CD4-positive, alpha-beta memory T cell (primary cell): ENCODE measurements at regions of chr17 and their contacts with region 1.

Region 1: GRCh38 chr17:75589012-75589918 is 1.7 kb downstream of the MYO15B start:
- DNase-seq: peak; percentile 85 to 93 (median 92)
- H3K4me3 ChIP-seq: peak overlapping the region in 1 of 2 donors; percentile 41
- H3K4me3 Mint-ChIP-seq: peak overlapping the region; percentile 68 to 83 (median 78)
- H3K27ac ChIP-seq: no peak overlapping the region
- H3K27ac Mint-ChIP-seq: peak overlapping the region in 5 of 7 donors; percentile 57 to 88 (median 86)
- H3K4me1 ChIP-seq: peaks cover 18% of the 10 kb centered on the region
- H3K4me1 Mint-ChIP-seq: peaks cover 0 to 6% (median 3%) of the 10 kb centered on the region in 4 donors
- H3K27me3 ChIP-seq: no peaks in the 10 kb centered on the region
- H3K27me3 Mint-ChIP-seq: peaks cover 0 to 4% of the 10 kb centered on the region in 2 donors

Region 2: DNA sequence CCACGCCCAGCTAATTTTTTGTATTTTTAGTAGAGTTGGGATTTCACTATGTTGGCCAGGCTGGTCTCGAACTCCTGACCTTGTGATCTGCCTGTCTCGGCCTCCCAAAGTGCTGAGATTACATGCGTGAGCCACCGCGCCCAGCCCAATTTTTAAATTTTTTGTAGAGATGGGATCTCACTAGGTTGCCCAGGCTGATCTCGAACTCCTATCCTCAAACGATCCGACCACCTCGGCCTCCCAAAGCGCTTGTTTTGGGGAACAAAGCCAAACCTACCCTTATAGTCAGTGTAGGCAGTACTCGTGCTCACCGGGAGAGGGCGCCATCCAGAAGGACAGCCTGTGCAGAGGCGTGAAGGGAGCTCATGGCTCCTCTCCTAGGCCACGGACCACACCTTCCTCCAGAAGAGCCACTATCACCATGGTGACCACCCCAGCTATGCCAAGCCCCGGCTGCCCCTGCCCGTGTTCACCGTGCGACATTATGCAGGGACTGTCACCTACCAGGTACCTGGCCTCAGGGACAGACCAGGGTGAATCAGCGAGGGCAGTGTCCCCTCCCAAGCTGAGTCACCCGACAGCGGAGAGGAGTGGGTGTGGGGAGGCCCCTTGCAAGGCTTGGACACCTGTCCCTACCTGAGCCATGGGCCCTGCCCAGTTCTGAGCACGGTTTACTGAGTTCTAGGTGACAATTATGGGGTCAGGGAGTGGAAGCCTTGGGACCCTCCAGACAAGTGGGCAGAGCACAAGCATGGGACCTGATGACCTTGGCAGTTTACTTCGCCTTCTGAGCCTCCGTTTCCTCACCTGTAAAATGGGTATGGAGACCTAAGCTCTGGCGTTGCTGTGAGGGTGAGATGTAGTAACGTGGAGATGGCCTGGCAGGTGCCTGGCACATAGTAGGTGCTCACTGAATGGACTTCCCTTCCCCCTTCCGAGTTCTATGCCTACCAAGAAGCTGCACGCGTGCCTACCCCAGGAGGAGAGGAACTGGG is 12.1 kb after region 1 on chr17:
- CTCF ChIA-PET with region 1: interaction called, 13 read pairs
- POLR2A ChIA-PET with region 1: no interaction called
- intact Hi-C with region 1: no loop called
- DNase-seq: peak; percentile 41 to 62 (median 46)
- H3K4me3 ChIP-seq: no peak overlapping the region
- H3K4me3 Mint-ChIP-seq: no peak overlapping the region
- H3K27ac ChIP-seq: no peak overlapping the region
- H3K27ac Mint-ChIP-seq: peak overlapping the region in 1 of 7 donors; percentile 30
- H3K4me1 ChIP-seq: no peaks in the 10 kb centered on the region
- H3K4me1 Mint-ChIP-seq: peaks cover 0 to 3% (median 0%) of the 10 kb centered on the region in 4 donors
- H3K27me3 ChIP-seq: no peaks in the 10 kb centered on the region
- H3K27me3 Mint-ChIP-seq: no peaks in the 10 kb centered on the region

Region 3: GRCh38 chr17:75625813-75626486 is 36.7 kb after region 1 on chr17:
- CTCF ChIA-PET with region 1: no interaction called
- POLR2A ChIA-PET with region 1: no interaction called
- intact Hi-C with region 1: no loop called
- DNase-seq: no peak
- H3K4me3 ChIP-seq: no peak overlapping the region
- H3K4me3 Mint-ChIP-seq: no peak overlapping the region
- H3K27ac ChIP-seq: no peak overlapping the region
- H3K27ac Mint-ChIP-seq: no peak overlapping the region
- H3K4me1 ChIP-seq: no peaks in the 10 kb centered on the region
- H3K4me1 Mint-ChIP-seq: no peaks in the 10 kb centered on the region
- H3K27me3 ChIP-seq: no peaks in the 10 kb centered on the region
- H3K27me3 Mint-ChIP-seq: no peaks in the 10 kb centered on the region